AG04450 (cell line): ENCODE measurements at regions of chr2 and their contacts with region 1.

Region 1: DNA sequence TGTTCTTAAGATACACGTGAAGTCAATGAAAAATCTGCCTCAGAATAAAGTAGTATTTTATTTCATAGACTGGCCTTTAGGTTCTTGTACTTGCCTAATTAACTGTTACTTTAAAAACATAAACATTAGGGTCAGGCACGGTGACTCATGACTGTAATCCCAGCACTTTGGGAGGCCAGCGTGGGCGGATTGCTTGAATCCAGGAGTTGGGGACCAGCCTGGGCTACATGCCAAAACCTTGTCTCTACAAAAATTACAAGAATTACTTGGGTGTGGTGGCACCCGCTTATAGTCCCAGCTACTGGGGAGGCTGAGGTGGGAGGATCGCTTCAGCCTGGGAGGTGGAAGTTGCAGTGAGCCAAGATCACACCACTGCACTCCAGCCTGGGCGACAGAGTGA is 16.0 kb upstream of the SNORC start:
- DNase-seq: peak; percentile 60
- H3K4me3 ChIP-seq: no peak overlapping the region
- H3K27ac ChIP-seq: no peak overlapping the region
- H3K27me3 ChIP-seq: no peaks in the 10 kb centered on the region
- CTCF ChIP-seq: no peak

Region 2: GRCh38 chr2:232843834-232844233 is 10.2 kb before region 1 on chr2:
- CTCF ChIA-PET with region 1: interaction called, 22 read pairs
- POLR2A ChIA-PET with region 1: no interaction called
- DNase-seq: no peak
- H3K4me3 ChIP-seq: no peak overlapping the region
- H3K27ac ChIP-seq: no peak overlapping the region
- H3K27me3 ChIP-seq: no peaks in the 10 kb centered on the region
- CTCF ChIP-seq: peak; percentile 32; the same call in 1 of the 2 replicates

Region 3: GRCh38 chr2:232866104-232866503 is 12.0 kb after region 1 on chr2:
- CTCF ChIA-PET with region 1: interaction called, 11 read pairs
- POLR2A ChIA-PET with region 1: no interaction called
- DNase-seq: no peak
- H3K4me3 ChIP-seq: no peak overlapping the region
- H3K27ac ChIP-seq: no peak overlapping the region
- H3K27me3 ChIP-seq: no peaks in the 10 kb centered on the region
- CTCF ChIP-seq: no peak

Region 4: GRCh38 chr2:233029321-233029720 is 175.2 kb after region 1 on chr2:
- CTCF ChIA-PET with region 1: interaction called, 24 read pairs
- POLR2A ChIA-PET with region 1: no interaction called
- DNase-seq: no peak
- H3K4me3 ChIP-seq: no peak overlapping the region
- H3K27ac ChIP-seq: no peak overlapping the region
- H3K27me3 ChIP-seq: no peaks in the 10 kb centered on the region
- CTCF ChIP-seq: no peak

Region 5: DNA sequence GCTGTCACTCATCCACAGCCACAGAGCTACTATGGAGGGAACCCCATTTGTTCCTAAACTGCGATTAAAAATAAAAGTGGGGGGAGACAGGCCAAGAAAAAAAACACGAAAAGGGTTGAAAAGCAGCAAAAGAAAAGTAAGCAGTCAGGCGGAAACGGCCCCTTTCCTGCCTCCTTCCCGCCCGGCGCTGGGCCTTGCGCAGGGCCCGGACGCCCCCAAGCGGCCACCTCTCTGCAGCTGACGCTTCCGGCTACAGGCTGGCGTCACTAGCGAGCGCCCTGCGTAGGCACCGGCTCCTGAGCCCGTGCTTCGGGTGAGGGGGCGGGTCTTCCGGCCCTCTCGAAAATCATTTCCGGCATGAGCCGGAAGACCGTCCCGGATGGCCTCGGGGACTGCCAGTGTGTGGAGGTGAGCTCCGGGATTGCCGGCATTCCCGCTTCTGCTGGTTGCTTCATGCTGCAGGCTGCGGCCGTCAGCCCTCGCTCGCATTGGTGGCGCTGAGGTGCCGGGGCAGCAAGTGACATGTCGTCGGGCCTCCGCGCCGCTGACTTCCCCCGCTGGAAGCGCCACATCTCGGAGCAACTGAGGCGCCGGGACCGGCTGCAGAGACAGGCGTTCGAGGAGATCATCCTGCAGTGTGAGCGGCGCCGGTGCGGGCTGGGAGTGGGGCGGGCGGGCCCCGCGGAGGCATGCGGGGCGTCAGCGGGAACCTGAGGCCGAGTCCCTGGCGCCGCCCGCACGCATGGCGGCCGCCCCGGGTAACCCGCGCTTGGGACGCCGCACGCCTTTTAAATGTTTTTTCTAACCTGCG is 397.4 kb after region 1 on chr2 and contains the start of gene ATG16L1:
- CTCF ChIA-PET with region 1: interaction called, 68 read pairs
- POLR2A ChIA-PET with region 1: no interaction called
- DNase-seq: peak; percentile 93
- H3K4me3 ChIP-seq: peak within 1 kb of the TSS; percentile 97
- H3K27ac ChIP-seq: peak within 1 kb of the TSS; percentile 63
- H3K27me3 ChIP-seq: no peaks in the 10 kb centered on the region
- CTCF ChIP-seq: peak; percentile 97
- polyA plus RNA-seq, gene ATG16L1: 28.3 and 32.8 TPM in 2 replicates